ENCODE measurements at regions of chr19 and their contacts with region 1.

Region 1: DNA sequence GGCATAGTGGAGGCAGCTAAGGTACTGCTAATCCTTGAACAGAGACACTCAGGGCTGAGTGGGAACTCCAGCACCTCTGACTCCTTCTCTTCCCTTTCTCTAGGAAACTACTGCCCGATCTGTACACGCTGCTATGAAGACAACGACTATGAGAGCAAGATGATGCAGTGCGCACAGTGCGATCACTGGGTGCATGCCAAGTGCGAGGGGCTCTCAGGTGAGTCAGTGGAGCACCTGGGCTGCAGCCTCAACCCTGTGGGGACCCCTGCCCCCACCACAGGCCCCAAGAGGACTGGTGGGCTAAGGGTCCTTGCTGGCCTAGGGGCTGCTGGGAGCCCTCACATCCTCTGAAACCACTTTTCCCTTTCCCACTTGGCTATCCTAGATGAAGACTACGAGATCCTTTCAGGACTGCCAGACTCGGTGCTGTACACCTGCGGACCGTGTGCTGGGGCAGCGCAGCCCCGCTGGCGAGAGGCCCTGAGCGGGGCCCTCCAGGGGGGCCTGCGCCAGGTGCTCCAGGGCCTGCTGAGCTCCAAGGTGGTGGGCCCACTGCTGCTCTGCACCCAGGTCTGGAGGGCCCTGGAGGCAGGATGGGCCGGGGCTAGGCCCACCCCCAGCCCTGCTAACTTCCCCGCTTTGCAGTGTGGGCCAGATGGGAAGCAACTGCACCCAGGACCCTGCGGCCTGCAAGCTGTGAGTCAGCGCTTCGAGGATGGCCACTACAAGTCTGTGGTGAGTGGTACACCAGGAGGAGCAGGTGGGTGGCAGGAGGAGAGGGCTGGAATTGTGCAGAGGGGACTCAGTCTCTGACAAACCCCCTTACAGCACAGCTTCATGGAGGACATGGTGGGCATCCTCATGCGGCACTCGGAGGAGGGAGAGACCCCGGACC is 9.5 kb downstream of the KMT2B start:
- DNase-seq: no peak
- ATAC-seq: no peak
- H3K4me3 ChIP-seq: no peak overlapping the region
- H3K27ac ChIP-seq: no peak overlapping the region
- H3K4me1 ChIP-seq: peaks cover 0 to 4% of the 10 kb centered on the region in 2 experiments; a peak in 1 of 5 replicates
- H3K27me3 ChIP-seq: no peaks in the 10 kb centered on the region
- CTCF ChIP-seq: no peak
- EP300 ChIP-seq: no peak
- POLR2A ChIP-seq: no peak
- RAD21 ChIP-seq: no peak

Region 2: DNA sequence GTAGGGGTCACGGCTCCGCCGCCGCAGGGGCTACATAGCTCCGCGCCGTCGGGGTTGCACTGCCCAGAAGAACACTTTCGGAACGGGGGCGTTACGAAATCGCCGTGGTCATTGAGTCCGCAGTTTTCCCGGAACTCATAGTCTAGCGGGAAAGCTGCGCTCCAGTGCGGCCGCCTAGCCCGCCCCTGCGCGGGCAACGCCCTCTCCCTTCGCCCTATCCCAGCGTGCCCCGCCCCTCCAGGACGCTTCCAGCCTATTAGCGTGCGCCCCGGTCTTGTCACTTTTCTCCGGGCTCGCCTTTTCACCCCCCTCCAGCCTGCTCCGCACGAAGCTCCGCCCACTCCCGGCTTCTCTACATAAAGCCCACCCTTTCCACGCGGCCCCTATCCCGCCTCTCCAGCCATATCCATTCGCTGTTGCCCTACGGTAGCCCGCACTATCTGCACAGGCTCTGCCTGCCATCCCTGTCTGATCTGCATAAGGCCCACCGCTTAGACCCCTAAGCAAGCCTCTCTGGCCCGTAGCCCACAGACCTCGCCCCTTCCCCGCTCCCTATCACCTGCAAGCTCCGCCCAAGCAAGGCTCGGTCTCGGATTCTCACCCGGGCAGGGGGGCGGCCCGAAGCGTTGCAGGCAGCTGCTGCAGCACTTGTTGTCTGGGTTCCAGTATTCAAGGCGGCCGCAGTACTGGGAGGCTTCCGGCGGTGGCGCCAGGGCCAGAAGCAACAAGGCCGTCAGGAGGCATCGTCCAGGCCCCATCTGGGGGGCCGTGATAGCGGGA is 13.3 kb after region 1 on chr19:
- CTCF ChIA-PET with region 1: no interaction called
- POLR2A ChIA-PET with region 1: interaction called, 19 read pairs
- in situ Hi-C with region 1: no loop called
- intact Hi-C with region 1: no loop called
- DNase-seq: peak; percentile 92 to 99 (median 96)
- ATAC-seq: peak; percentile 90
- H3K4me3 ChIP-seq: peak overlapping the region; percentile 65
- H3K27ac ChIP-seq: peak overlapping the region; percentile 85
- H3K4me1 ChIP-seq: peaks cover 24 to 53% of the 10 kb centered on the region in 2 experiments; a peak in 4 of 5 replicates
- H3K27me3 ChIP-seq: no peaks in the 10 kb centered on the region
- CTCF ChIP-seq: peak; percentile 46 to 61 (median 53); a peak in 5 of 6 replicates
- EP300 ChIP-seq: no peak
- POLR2A ChIP-seq: peak; percentile 87
- RAD21 ChIP-seq: peak in 1 of 2 experiments; percentile 25; a peak in 1 of 4 replicates

Region 3: DNA sequence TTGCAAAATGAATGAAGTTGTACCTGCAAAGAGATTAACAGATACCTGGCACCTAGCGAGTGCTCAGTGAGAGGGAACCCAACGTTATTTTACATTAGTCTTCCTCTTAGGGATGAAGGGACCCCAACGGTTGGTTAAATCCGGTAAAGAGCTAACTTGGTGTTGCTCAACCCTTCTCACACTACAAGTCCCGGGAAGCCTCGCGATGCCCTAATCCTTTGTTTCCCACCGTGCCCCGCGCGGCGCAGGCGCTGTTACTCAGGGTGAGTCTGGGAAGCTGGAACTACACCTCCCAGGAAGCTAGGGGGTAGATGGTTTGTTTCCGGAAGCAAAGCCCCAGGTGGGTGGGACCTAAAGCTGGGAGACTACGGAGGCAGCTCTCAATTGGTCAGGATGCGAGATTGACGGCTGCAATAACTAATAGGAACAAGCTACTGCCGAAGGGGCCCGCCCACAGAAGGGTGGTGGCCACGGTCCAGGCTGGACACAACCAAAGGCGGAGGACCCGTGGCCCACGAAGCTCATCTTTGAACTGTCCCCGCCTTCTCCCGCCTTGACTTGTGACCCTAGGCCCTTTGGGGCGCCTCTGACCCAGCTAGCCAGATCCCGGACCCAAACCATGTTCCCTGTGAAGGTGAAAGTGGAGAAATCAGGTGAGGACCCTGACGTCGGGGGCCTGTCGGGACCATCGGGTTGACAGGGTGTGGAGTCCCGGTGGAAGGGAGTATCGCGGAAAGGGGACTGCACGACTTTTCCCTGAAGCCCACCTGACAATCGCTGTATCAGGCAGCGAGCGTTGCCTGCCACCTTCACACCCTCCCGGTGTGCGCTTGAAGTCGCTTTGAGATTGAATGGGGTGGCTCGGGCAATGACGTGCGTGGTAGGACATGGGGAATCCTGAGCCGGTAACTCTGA is 21.1 kb after region 1 on chr19 and contains the start of gene LIN37:
- CTCF ChIA-PET with region 1: no interaction called
- POLR2A ChIA-PET with region 1: interaction called, 12 read pairs
- in situ Hi-C with region 1: no loop called
- intact Hi-C with region 1: no loop called
- DNase-seq: peak; percentile 88 to 99 (median 93)
- ATAC-seq: peak; percentile 90
- H3K4me3 ChIP-seq: peak within 1 kb of the TSS; percentile 82
- H3K27ac ChIP-seq: peak within 1 kb of the TSS; percentile 68
- H3K4me1 ChIP-seq: peaks cover 18 to 31% of the 10 kb centered on the region in 2 experiments; a peak in 4 of 5 replicates
- H3K27me3 ChIP-seq: no peaks in the 10 kb centered on the region
- CTCF ChIP-seq: no peak
- EP300 ChIP-seq: no peak
- POLR2A ChIP-seq: peak; percentile 78
- RAD21 ChIP-seq: no peak
- polyA plus RNA-seq, gene LIN37: 1.2 to 3.1 TPM

Measured in K562 (cell line).